Gastrocnemius medialis (tissue), 4 donors: ENCODE measurements at regions of chrX and their contacts with region 1.

Region 1: DNA sequence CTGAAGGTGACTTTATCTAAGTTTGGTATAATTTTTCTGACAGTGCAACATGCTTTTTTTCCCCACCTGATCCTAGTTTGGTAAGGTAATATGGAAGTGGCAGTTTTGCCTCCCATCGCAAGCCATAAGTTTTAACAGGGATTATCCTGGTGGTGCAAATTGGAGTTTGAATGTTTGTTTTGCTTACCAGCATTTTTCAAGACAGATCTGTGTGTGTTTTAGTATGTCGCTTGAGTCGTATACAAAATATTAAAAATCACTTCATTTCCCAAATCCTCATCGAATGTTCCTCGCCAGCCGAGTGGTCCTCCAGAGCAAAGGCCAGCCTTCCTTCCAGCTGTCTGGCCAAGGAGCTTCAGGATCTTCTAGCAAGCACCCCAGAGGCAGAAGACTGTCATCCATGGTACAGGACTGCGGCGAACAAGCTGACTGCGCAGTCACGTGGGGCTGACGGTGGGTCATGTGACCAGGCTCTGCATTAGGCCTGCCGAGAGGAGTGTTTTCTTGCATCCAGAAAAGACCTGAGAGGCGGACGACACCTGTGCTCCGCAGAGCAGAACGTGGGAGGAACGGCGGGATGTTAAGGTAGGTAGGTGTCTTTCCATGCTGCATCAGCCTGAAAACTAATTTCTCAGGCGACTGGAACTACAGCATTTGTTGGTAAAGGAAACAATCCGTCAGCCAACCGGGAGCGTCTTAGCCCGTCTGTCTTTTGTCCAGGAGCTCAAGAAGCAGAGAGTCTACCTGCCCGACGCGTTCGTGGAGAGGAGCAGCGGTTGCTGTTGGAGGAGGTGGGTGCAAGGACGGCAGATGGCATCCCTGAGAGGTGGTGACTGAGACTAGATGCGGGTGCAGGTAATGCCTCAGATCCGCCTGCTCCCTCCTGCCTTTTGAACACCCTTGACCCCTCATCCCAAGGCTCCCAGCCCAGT is at the start of gene GPRASP3:
- DNase-seq: peak; percentile 55 to 75
- ATAC-seq: peak; percentile 79 to 94
- H3K4me3 ChIP-seq: peak within 1 kb of the TSS; percentile 45 to 61 (median 57)
- H3K27ac ChIP-seq: peak within 1 kb of the TSS; percentile 27 to 77 (median 68)
- H3K4me1 ChIP-seq: no peaks in the 10 kb centered on the region
- H3K27me3 ChIP-seq: no peaks in the 10 kb centered on the region
- CTCF ChIP-seq: no peak
- POLR2A ChIP-seq: peak in 1 of 2 donors; percentile 13
- total RNA-seq, gene GPRASP3: 1.4 to 3.4 (median 2.7) TPM

Region 2: DNA sequence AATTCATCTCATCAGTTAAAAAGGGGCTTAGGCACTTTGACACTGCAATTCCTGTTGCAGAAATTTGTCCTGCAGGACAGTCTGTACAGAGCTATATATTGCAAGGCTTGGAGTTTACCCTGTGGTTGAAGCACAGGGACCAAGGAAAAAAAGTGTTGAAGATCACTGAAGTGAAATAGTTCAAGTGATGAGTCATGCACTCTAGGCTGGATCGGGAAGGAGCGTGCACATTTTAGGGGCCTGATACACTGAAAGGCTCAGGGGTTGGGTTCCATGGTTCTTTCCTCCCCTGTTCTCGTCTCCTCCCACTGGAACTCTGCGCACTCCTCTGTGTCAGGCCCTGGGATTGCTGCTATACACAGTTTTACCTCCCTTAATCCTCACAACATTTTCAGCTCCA is 956.0 kb before region 1 on chrX:
- in situ Hi-C with region 1: no loop called
- intact Hi-C with region 1: no loop called
- DNase-seq: no peak
- ATAC-seq: no peak
- H3K4me3 ChIP-seq: no peak overlapping the region
- H3K27ac ChIP-seq: no peak overlapping the region
- H3K4me1 ChIP-seq: no peaks in the 10 kb centered on the region
- H3K27me3 ChIP-seq: no peaks in the 10 kb centered on the region
- CTCF ChIP-seq: no peak
- POLR2A ChIP-seq: no peak

Region 3: GRCh38 chrX:102672856-102673255 is 47.6 kb before region 1 on chrX:
- in situ Hi-C with region 1: no loop called
- intact Hi-C with region 1: no loop called
- DNase-seq: no peak
- ATAC-seq: no peak
- H3K4me3 ChIP-seq: no peak overlapping the region
- H3K27ac ChIP-seq: no peak overlapping the region
- H3K4me1 ChIP-seq: no peaks in the 10 kb centered on the region
- H3K27me3 ChIP-seq: no peaks in the 10 kb centered on the region
- CTCF ChIP-seq: no peak
- POLR2A ChIP-seq: no peak

Region 4: GRCh38 chrX:102808336-102808735 is 87.8 kb after region 1 on chrX:
- in situ Hi-C with region 1: loop called in 1 of 4 experiments (anchors 25 kb)
- intact Hi-C with region 1: no loop called
- DNase-seq: no peak
- ATAC-seq: no peak
- H3K4me3 ChIP-seq: no peak overlapping the region
- H3K27ac ChIP-seq: no peak overlapping the region
- H3K4me1 ChIP-seq: no peaks in the 10 kb centered on the region
- H3K27me3 ChIP-seq: no peaks in the 10 kb centered on the region
- CTCF ChIP-seq: no peak
- POLR2A ChIP-seq: no peak